CD4-positive, alpha-beta memory T cell (primary cell): ENCODE measurements at regions of chr12 and their contacts with region 1.

Region 1: DNA sequence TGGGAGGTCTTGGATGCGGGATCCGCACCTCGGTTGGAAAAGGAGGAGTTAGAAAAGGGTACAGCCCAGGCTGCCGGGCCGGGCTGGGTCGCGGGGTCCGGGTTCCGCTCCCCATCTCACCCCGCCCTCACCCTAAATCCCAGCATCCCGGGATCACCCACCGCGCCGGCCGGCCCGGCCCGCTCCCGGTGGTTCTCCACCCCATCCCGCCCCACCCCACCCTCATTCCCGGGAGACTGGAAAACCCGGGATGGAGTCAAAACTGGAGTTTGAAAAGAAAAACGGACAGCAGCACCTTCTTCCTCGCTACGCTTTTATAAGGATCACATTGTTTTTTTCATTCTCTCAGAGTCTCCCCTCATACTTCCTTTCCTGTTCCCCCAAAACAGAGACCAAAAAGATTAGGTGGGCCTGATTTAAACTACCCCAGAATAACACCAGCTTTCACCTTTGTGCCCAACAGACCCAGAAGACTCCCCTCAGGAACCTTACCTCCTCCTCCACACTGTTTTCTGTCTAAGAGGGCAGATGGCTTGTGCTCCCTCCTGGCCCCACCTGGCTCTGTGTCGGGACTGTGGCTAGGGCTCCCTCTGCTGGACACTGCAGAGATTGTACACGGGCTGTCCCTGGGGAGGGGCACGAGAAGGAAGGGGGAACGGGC is 2.8 kb downstream of the GLI1 start:
- DNase-seq: peak; percentile 84 to 88 (median 87)
- H3K4me3 ChIP-seq: peak overlapping the region; percentile 42 to 59
- H3K4me3 Mint-ChIP-seq: peak overlapping the region; percentile 86 to 95 (median 89)
- H3K27ac ChIP-seq: no peak overlapping the region
- H3K27ac Mint-ChIP-seq: peak overlapping the region; percentile 13 to 91 (median 80)
- H3K4me1 ChIP-seq: peaks cover 36% of the 10 kb centered on the region
- H3K4me1 Mint-ChIP-seq: peaks cover 23 to 58% (median 35%) of the 10 kb centered on the region in 4 donors
- H3K27me3 ChIP-seq: peaks cover 12% of the 10 kb centered on the region
- H3K27me3 Mint-ChIP-seq: peaks cover 7 to 18% of the 10 kb centered on the region in 2 donors

Region 2: DNA sequence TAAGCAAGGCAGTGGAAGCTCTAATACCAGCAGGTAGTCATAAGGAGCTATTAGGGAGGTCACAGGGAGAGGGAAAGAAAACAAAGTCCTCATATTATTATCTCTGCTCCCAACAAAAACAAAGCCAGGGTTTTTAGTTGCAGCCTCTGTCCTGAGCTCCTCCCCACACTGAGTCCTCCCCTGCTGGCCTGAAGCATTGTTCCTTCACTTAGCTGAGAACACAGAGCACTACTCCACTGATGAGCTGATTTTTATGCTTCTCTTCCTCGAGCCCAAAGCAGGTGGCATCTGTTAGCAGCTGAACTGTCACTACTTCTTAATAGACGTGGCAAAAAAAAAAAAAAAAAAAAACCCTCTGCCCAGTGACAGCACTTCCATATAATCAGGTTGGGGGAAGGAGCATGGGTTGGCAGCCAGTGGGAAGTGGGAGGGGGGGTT is 200.9 kb before region 1 on chr12:
- CTCF ChIA-PET with region 1: interaction called, 20 read pairs
- POLR2A ChIA-PET with region 1: no interaction called
- intact Hi-C with region 1: loop called (anchors 2 kb)
- DNase-seq: no peak
- H3K4me3 ChIP-seq: no peak overlapping the region
- H3K4me3 Mint-ChIP-seq: no peak overlapping the region
- H3K27ac ChIP-seq: no peak overlapping the region
- H3K27ac Mint-ChIP-seq: peak overlapping the region in 1 of 7 donors; percentile 30
- H3K4me1 ChIP-seq: no peaks in the 10 kb centered on the region
- H3K4me1 Mint-ChIP-seq: peaks cover 0 to 4% (median 2%) of the 10 kb centered on the region in 4 donors
- H3K27me3 ChIP-seq: no peaks in the 10 kb centered on the region
- H3K27me3 Mint-ChIP-seq: no peaks in the 10 kb centered on the region

Region 3: DNA sequence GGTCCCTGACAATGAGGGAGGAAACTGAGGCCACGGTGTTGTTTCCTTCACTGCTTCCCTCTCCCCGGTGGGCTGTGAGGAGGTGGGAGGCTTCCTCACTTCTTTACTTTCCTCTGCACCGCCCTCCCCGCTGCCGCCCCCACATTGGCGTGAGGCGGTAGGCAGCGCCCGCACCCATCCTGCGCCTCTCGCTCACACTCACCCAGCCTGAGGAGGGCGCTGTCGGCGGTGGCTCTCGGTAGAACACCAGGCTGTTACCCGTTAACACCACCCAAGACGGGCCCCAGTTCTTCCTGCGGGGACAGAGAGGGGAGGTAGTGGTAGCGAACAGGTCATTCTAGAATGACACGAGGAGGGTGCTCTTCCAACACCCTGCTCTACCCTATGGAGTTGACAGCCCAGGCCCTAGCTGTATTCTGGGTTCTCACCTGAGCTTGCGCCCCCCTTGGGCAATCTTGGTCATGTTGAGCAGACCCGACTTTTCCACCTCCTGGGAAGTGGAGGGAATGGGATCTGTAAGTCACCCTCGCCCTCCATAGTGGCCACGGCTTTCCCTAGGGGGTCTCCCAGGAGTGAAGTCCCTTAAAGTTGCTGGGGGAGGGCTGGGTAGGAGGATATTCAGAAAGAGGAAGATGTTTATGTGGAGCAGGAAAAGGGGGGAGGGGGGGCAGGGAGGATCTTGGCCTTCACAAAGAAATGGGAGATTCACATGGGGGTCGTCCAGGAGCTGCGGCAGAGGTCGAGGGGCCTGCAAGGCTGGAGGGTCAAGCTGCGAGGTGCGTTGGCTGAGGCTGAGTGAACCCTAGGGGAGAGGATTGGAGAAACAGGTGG is 14.0 kb after region 1 on chr12:
- CTCF ChIA-PET with region 1: interaction called, 204 read pairs
- POLR2A ChIA-PET with region 1: interaction called, 225 read pairs
- intact Hi-C with region 1: loop called (anchors 1 kb)
- DNase-seq: peak; percentile 65 to 80 (median 71)
- H3K4me3 ChIP-seq: peak overlapping the region; percentile 91 to 97
- H3K4me3 Mint-ChIP-seq: peak overlapping the region; percentile 89 to 99 (median 98)
- H3K27ac ChIP-seq: peak overlapping the region; percentile 86
- H3K27ac Mint-ChIP-seq: peak overlapping the region; percentile 98 to 100 (median 99)
- H3K4me1 ChIP-seq: peaks cover 81% of the 10 kb centered on the region
- H3K4me1 Mint-ChIP-seq: peaks cover 51 to 89% (median 69%) of the 10 kb centered on the region in 4 donors
- H3K27me3 ChIP-seq: no peaks in the 10 kb centered on the region
- H3K27me3 Mint-ChIP-seq: no peaks in the 10 kb centered on the region

Region 4: DNA sequence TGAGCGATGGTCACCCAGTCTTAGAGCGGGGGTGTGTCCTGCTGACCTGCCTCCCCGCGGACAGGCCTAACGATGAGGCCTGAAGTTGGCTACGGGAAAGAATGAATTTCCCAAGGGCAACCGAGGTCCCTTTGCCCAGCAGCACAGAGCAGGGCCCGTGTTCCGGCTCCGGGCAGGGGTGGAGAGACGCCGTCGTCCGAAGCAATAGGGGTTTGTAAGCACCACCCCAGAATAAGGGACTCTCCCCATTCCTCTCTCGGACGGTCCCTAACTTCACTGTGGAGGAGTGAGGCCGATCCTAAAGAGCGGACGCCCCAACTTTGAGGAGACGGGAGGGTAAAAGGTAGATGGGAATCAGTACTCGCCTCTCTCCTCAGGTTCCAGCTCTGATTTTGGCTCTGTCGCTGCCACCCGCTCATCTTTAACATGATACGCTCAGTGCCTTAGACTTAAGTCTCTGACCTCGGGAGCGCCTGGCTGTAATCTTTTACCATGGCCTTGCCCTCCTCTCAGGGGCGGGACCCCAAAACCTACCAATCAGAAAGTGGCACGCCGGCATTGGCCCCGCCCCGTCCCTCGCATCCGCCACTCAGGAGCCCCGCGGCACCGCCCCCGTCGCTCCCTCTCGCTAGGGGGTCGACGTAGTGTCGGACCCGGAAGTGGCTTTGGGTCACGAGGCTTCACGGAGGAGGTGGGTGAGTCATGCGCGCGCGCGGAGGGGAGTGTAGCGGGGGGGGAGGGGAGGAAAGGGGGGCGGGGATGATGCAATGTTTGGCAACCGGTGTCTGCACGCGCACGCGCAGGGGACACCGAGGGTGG is 57.9 kb after region 1 on chr12 and contains the start of gene DDIT3:
- CTCF ChIA-PET with region 1: interaction called, 12 read pairs
- POLR2A ChIA-PET with region 1: interaction called, 18 read pairs
- intact Hi-C with region 1: loop called (anchors 1 kb)
- DNase-seq: peak; percentile 99
- H3K4me3 ChIP-seq: peak within 1 kb of the TSS; percentile 75 to 99
- H3K4me3 Mint-ChIP-seq: peak within 1 kb of the TSS; percentile 93 to 99 (median 97)
- H3K27ac ChIP-seq: peak within 1 kb of the TSS; percentile 96
- H3K27ac Mint-ChIP-seq: peak within 1 kb of the TSS; percentile 99 to 100 (median 99)
- H3K4me1 ChIP-seq: peaks cover 65% of the 10 kb centered on the region
- H3K4me1 Mint-ChIP-seq: peaks cover 37 to 71% (median 49%) of the 10 kb centered on the region in 4 donors
- H3K27me3 ChIP-seq: no peaks in the 10 kb centered on the region
- H3K27me3 Mint-ChIP-seq: peaks cover 0 to 2% of the 10 kb centered on the region in 2 donors
- total RNA-seq, gene DDIT3: 38.5 to 40.8 TPM

Region 5: DNA sequence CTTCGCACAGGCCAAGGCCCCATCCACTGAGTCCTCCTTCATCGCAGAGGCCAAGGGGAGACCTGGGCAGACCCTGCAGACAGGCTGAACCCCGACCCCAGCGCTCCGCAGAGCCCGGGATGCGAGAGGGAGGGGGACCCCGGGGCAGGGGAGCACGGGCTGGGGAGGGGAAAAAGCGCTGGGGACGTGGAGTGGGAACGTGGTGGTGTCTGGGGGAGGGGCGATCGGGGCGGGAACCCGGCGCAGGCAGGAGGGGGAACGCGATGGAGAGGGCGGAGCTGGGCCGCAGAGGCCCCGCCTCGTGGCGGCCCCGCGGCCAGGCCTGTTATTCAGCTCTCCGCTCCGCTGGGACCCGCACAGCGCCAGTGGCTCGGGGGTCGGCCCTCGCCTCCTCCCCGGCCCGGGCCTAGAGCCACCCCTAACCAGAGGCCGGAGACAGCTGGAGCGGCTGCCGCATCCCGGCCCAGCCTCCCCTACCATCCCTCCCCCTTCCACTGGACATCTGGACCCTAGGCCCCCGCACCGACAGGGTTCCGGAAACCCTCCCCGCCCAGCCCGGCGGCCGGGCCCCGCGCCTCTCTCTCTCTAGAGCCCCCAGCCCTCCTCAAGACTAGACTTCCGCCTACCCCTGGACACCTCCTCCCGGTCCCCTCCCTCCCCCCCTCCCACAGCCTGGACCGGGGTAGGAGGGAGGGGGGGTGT is 148.9 kb after region 1 on chr12 and contains the start of gene ARHGEF25:
- CTCF ChIA-PET with region 1: no interaction called
- POLR2A ChIA-PET with region 1: no interaction called
- intact Hi-C with region 1: no loop called
- DNase-seq: no peak
- H3K4me3 ChIP-seq: peak within 1 kb of the TSS; percentile 23 to 57
- H3K4me3 Mint-ChIP-seq: peak within 1 kb of the TSS; percentile 74 to 89 (median 80)
- H3K27ac ChIP-seq: no peak within 1 kb of the TSS
- H3K27ac Mint-ChIP-seq: peak within 1 kb of the TSS in 4 of 7 donors; percentile 15 to 78 (median 57)
- H3K4me1 ChIP-seq: peaks cover 9% of the 10 kb centered on the region
- H3K4me1 Mint-ChIP-seq: peaks cover 3 to 17% (median 9%) of the 10 kb centered on the region in 4 donors
- H3K27me3 ChIP-seq: peaks cover 10% of the 10 kb centered on the region
- H3K27me3 Mint-ChIP-seq: peaks cover 3 to 21% of the 10 kb centered on the region in 2 donors
- total RNA-seq, gene ARHGEF25: 0.47 to 0.67 TPM

Region 6: GRCh38 chr12:57621497-57622292 is 159.3 kb after region 1 on chr12:
- CTCF ChIA-PET with region 1: interaction called, 36 read pairs
- POLR2A ChIA-PET with region 1: interaction called, 6 read pairs
- intact Hi-C with region 1: loop called (anchors 1 kb)
- DNase-seq: peak; percentile 34 to 57 (median 39)
- H3K4me3 ChIP-seq: peak overlapping the region in 1 of 2 donors; percentile 23
- H3K4me3 Mint-ChIP-seq: peak overlapping the region; percentile 63 to 90 (median 76)
- H3K27ac ChIP-seq: no peak overlapping the region
- H3K27ac Mint-ChIP-seq: peak overlapping the region in 2 of 7 donors; percentile 23 to 77
- H3K4me1 ChIP-seq: peaks cover 29% of the 10 kb centered on the region
- H3K4me1 Mint-ChIP-seq: peaks cover 24 to 36% (median 28%) of the 10 kb centered on the region in 4 donors
- H3K27me3 ChIP-seq: peaks cover 79% of the 10 kb centered on the region
- H3K27me3 Mint-ChIP-seq: peaks cover 82 to 87% of the 10 kb centered on the region in 2 donors

Region 7: DNA sequence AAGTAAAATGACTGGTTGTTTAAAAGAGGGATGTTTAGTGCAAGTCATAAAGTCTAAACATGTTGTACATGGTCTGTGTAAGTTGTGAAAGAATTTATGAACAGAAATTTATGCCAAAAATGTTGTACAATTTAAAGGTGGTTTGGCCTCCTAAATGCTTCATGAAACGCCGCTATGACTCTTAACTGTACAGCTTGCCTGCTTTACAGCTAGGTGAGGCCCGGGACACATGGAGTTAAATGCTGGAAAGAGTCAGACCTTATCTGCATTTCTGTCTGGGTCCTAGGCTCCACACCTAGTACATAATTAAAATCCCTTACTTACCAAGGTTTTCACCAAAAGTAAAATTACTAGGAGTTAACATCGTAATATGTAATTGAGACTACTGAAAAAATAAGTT is 199.0 kb after region 1 on chr12:
- CTCF ChIA-PET with region 1: no interaction called
- POLR2A ChIA-PET with region 1: no interaction called
- intact Hi-C with region 1: no loop called
- DNase-seq: no peak
- H3K4me3 ChIP-seq: no peak overlapping the region
- H3K4me3 Mint-ChIP-seq: no peak overlapping the region
- H3K27ac ChIP-seq: no peak overlapping the region
- H3K27ac Mint-ChIP-seq: no peak overlapping the region
- H3K4me1 ChIP-seq: no peaks in the 10 kb centered on the region
- H3K4me1 Mint-ChIP-seq: no peaks in the 10 kb centered on the region
- H3K27me3 ChIP-seq: no peaks in the 10 kb centered on the region
- H3K27me3 Mint-ChIP-seq: peaks cover 0 to 2% of the 10 kb centered on the region in 2 donors

Region 8: GRCh38 chr12:57744777-57745484 is 282.6 kb after region 1 on chr12 and contains the start of gene TSPAN31:
- CTCF ChIA-PET with region 1: interaction called, 9 read pairs
- POLR2A ChIA-PET with region 1: interaction called, 3 read pairs
- intact Hi-C with region 1: loop called (anchors 5 kb)
- DNase-seq: peak; percentile 91 to 98 (median 95)
- H3K4me3 ChIP-seq: peak within 1 kb of the TSS; percentile 72 to 83
- H3K4me3 Mint-ChIP-seq: peak within 1 kb of the TSS; percentile 86 to 97 (median 92)
- H3K27ac ChIP-seq: peak within 1 kb of the TSS; percentile 93
- H3K27ac Mint-ChIP-seq: peak within 1 kb of the TSS; percentile 88 to 99 (median 97)
- H3K4me1 ChIP-seq: peaks cover 49% of the 10 kb centered on the region
- H3K4me1 Mint-ChIP-seq: peaks cover 30 to 58% (median 43%) of the 10 kb centered on the region in 4 donors
- H3K27me3 ChIP-seq: no peaks in the 10 kb centered on the region
- H3K27me3 Mint-ChIP-seq: no peaks in the 10 kb centered on the region
- total RNA-seq, gene TSPAN31: 27.5 to 30.6 TPM